ENCODE measurements at regions of chr16 and their contacts with region 1.

Region 1: GRCh38 chr16:13767215-13767614 is 152.7 kb upstream of the ERCC4 start:
- DNase-seq: no peak
- ATAC-seq: no peak
- H3K4me3 ChIP-seq: no peak overlapping the region
- H3K27ac ChIP-seq: no peak overlapping the region
- H3K4me1 ChIP-seq: no peaks in the 10 kb centered on the region
- H3K27me3 ChIP-seq: no peaks in the 10 kb centered on the region

Region 2: DNA sequence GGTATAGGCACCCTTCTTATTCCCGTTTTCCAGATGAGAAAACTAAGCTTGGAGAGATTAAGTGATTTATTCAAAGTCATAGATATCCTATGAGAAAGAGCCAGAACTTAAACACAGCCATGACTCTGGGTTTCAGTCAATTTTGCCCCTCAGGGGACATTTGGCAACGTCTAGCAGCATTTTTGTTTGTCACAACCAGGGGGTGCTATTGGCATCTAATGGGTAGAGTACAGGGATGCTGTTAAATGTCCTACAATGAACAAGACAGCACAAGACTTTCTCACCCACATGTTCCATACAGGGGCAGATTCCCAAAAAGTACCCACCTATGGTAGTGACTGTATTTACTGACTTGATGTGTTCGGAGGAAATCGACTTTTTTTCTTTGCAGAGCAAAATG is 870.7 kb before region 1 on chr16:
- intact Hi-C with region 1: loop called in 1 of 2 experiments (anchors 5 kb)
- DNase-seq: no peak
- ATAC-seq: no peak
- H3K4me3 ChIP-seq: no peak overlapping the region
- H3K27ac ChIP-seq: no peak overlapping the region
- H3K4me1 ChIP-seq: no peaks in the 10 kb centered on the region
- H3K27me3 ChIP-seq: no peaks in the 10 kb centered on the region

Region 3: GRCh38 chr16:13718748-13719147 is 48.5 kb before region 1 on chr16:
- intact Hi-C with region 1: loop called in 1 of 2 experiments (anchors 2 kb)
- DNase-seq: no peak
- ATAC-seq: no peak
- H3K4me3 ChIP-seq: no peak overlapping the region
- H3K27ac ChIP-seq: no peak overlapping the region
- H3K4me1 ChIP-seq: no peaks in the 10 kb centered on the region
- H3K27me3 ChIP-seq: no peaks in the 10 kb centered on the region

Region 4: DNA sequence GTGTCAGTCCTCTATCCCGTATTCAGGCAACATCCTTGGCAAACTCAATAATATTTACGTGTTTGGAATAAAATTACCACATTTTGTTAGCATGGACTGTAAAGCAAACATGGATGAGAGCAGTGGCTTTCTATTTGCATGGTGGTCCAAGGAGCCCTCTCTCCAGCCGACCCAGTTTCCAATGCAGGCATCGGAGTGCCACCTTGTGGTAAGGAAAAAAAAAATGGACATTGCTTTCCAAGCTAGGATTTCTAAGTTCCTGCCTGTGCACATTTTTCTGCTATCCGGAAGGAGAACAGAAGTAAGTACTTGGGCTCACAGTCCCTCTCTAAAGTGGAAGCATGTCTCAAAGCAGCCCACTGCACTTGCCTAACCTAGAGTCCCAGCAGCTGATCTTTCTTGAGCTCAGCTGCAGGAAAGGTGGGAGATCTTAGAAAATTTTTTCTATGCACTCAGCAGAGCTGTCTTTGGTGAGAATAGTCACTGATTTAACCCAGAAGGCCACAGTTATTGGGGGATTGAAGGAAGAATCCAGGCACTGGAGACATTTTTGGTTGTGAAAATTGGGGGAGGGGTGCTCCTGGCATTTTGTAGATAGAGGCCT is 106.7 kb after region 1 on chr16:
- intact Hi-C with region 1: loop called in 1 of 2 experiments (anchors 5 kb)
- DNase-seq: no peak
- ATAC-seq: no peak
- H3K4me3 ChIP-seq: no peak overlapping the region
- H3K27ac ChIP-seq: no peak overlapping the region
- H3K4me1 ChIP-seq: peaks cover 0 to 3% of the 10 kb centered on the region in 2 donors
- H3K27me3 ChIP-seq: no peaks in the 10 kb centered on the region